Mammary epithelial cell (primary cell): ENCODE measurements at regions of chr7 and their contacts with region 1.

Region 1: GRCh38 chr7:48109848-48110663 is 21.0 kb downstream of the UPP1 start:
- DNase-seq: peak; percentile 71
- H3K4me3 ChIP-seq: no peak overlapping the region
- H3K27ac ChIP-seq: no peak overlapping the region
- H3K4me1 ChIP-seq: peaks cover 12% of the 10 kb centered on the region
- H3K27me3 ChIP-seq: no peaks in the 10 kb centered on the region
- CTCF ChIP-seq: peak; percentile 98 to 99

Region 2: DNA sequence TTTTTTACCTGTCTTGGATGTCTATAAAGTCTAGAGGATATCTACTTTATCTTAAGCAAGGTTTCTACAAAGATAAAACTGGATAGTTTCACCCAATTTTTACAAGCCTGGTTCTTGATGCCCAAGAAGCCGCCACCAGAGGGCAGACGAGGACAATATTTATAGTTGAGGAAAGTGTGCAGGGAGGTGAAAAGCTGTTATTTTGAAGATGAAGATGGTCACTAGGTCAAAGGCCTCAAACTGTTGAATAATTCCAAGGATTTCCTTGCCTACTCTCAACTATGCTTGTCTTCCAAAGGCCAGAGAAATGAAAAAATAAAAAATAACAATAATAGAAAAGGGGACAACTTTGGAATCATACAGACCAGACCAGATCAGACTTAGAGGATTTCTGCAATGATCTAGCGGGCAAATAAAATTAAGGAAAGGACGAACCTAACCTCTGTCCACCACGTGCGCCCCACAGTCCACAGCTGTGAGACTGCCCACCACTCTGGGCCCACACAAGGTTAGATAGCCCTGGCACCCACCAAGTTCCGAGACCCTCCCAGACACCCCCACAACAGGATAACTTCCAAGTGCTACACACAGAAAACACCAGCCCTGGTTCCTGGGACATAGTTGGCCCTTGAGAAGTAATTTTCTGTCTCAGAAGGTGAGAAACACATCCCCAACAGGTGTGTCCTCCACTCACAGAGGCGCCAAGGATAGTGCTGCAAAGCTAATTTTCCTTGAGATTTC is 164.6 kb before region 1 on chr7:
- CTCF ChIA-PET with region 1: interaction called, 10 read pairs
- dilution Hi-C with region 1: no loop called
- in situ Hi-C with region 1: no loop called
- intact Hi-C with region 1: loop called (anchors 1 kb)
- DNase-seq: peak; percentile 30
- H3K4me3 ChIP-seq: no peak overlapping the region
- H3K27ac ChIP-seq: no peak overlapping the region
- H3K4me1 ChIP-seq: peaks cover 16% of the 10 kb centered on the region
- H3K27me3 ChIP-seq: no peaks in the 10 kb centered on the region
- CTCF ChIP-seq: peak; percentile 66 to 74

Region 3: DNA sequence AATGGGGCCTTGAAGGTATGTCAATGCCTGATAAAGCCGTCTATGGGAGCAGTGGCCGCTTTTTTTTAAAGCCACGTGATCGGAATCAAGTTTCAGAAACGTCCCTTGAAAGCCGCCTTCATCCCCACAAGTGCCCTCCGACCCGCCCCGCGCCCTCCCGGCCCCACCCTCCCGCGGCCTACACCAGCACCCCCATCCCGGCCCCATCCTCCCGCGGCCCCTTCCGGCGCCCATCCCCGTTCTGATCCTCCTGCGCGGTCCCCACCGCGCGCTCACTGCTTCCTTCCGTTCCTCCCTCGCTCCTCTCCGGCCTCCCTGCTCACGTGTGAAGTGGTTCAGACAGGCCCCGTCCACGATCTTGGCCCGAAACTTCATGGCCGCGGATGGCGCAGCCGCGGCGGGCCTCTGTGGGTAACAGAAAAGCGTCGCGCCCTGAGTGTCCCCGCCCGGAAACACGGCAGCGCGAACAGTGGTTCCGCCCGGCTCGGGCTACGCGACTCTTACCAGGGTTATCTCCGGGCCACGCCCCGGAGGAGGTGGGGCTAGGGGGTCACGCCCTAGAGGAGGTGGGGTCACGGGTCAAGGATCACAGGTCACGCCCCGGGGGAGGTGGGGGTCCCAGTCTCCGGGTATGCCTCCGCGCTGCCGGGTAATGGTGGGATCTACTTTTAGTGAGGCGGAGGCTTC is 130.8 kb before region 1 on chr7 and contains the start of gene HUS1:
- CTCF ChIA-PET with region 1: interaction called, 3 read pairs
- dilution Hi-C with region 1: no loop called
- in situ Hi-C with region 1: loop called in 1 of 2 experiments (anchors 10 kb)
- intact Hi-C with region 1: no loop called
- DNase-seq: peak; percentile 85
- H3K4me3 ChIP-seq: peak within 1 kb of the TSS; percentile 73 to 90 (median 78)
- H3K27ac ChIP-seq: peak within 1 kb of the TSS; percentile 50
- H3K4me1 ChIP-seq: peaks cover 10% of the 10 kb centered on the region
- H3K27me3 ChIP-seq: no peaks in the 10 kb centered on the region
- CTCF ChIP-seq: no peak
- total RNA-seq, gene HUS1: 31.3 to 36.8 TPM

Region 4: DNA sequence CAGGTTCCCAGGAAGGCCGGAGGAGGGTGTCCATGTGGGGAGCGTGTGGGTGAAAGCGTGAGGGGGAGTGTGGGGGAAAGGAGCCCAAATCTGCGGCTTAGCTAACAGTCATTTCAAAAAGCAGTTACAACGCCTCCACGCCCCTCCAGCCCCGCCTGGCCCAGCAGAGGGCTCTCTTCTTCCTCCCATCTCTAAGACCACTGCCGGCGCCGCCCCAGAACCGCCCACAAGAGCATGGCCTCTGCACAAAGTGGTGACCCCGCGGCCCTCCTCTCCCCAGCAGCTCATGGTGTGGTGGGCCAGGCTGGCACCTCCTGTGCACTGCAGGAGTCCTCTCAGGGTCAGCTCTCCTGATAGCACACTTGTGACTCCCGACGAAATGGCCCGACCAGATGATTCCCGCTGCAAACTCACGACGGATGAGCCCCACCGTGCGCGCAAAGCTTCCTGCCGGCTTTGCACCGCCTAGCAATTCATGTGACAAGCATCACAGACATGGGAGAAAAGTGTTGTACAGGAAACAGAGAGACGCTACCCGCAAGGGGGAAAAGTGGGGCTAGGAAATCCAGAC is 118.2 kb before region 1 on chr7:
- CTCF ChIA-PET with region 1: interaction called, 5 read pairs
- dilution Hi-C with region 1: no loop called
- in situ Hi-C with region 1: no loop called
- intact Hi-C with region 1: loop called (anchors 1 kb)
- DNase-seq: peak; percentile 52
- H3K4me3 ChIP-seq: peak overlapping the region; percentile 34 to 52 (median 35)
- H3K27ac ChIP-seq: no peak overlapping the region
- H3K4me1 ChIP-seq: peaks cover 7% of the 10 kb centered on the region
- H3K27me3 ChIP-seq: no peaks in the 10 kb centered on the region
- CTCF ChIP-seq: peak; percentile 32 to 62

Region 5: DNA sequence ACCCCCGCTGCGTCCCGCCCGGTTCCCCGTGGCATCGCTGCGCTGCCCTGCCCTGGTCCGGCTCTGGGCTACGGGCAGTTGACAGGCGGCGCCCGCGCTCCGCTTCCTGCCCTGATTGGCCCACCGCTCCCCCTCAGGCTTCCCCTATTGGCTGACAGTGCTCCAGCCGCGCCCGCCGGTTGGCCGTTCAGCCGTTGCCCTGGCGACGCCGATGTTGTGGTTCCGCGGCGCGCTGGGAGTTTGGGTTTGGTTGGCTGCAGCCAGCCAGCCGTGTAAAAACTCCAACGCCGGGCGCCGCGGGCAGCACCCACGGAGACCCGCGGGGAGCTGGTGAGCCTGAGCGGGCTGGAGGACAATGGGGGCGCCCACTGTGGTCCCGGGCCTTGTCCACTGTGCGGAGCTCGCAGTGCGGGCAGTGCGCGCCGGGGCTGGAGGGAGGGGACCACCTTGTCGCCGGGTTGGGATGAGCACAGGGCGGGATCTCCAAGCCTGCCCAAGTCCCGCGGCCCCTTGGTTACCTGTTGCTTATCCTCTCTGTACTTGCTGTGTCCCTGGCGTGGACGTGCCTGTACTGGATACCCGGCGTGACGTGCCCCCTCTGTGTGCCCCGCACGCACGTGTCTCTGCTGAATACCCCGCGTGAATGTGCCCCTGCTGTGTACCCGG is 74.6 kb before region 1 on chr7 and contains the start of gene C7orf57:
- CTCF ChIA-PET with region 1: no interaction called
- dilution Hi-C with region 1: no loop called
- in situ Hi-C with region 1: no loop called
- intact Hi-C with region 1: no loop called
- DNase-seq: peak; percentile 87
- H3K4me3 ChIP-seq: peak within 1 kb of the TSS; percentile 53 to 74 (median 61)
- H3K27ac ChIP-seq: peak within 1 kb of the TSS; percentile 33
- H3K4me1 ChIP-seq: peaks cover 15% of the 10 kb centered on the region
- H3K27me3 ChIP-seq: no peaks in the 10 kb centered on the region
- CTCF ChIP-seq: peak in 1 of 2 donors; percentile 25
- total RNA-seq, gene C7orf57: 0.67 to 2.0 TPM

Region 6: DNA sequence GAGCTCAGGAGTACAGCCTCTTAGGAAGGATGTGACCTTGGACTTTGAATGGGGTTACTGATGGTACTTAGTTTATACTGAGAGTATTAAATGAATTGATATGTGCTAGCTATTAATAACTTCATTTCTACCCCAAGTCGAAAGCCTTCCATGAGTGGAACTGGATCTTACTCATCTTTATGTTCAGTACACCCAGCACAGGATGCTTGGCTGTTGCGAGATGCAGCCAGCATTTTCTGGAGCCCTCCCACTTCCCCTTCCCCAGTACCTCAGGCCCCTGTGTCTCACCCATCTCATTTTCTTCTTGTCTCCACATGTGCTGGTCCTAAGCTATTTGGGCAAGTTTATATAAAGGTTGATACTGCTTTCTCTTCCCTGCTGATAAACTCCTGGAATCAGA is 13.8 kb before region 1 on chr7:
- CTCF ChIA-PET with region 1: interaction called, 11 read pairs
- dilution Hi-C with region 1: no loop called
- in situ Hi-C with region 1: no loop called
- intact Hi-C with region 1: no loop called
- DNase-seq: no peak
- H3K4me3 ChIP-seq: no peak overlapping the region
- H3K27ac ChIP-seq: no peak overlapping the region
- H3K4me1 ChIP-seq: peaks cover 56% of the 10 kb centered on the region
- H3K27me3 ChIP-seq: no peaks in the 10 kb centered on the region
- CTCF ChIP-seq: no peak

Region 7: DNA sequence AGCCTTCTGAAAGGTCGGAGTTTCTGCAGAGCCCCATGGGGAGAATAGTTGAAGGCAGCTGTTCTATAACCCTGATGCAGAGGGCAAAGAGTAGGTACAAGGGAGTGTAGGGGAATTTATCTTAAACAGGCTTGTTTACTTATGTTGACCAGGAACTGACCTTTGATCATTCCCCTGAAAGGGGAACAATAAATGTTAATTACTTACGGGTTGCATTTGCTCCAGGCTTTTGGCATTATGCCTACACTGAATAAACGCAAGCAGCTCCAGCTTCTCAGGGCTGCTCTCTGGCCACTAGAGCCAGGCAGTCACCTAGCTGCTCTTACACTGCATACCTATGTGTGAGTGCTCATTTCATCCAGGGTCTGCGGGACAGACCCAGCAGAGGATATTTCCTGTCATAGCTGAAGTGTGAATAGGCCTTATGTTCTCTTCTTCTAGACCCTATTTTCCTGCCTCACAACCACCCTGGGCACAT is 34.3 kb after region 1 on chr7:
- CTCF ChIA-PET with region 1: no interaction called
- dilution Hi-C with region 1: no loop called
- in situ Hi-C with region 1: no loop called
- intact Hi-C with region 1: no loop called
- DNase-seq: no peak
- H3K4me3 ChIP-seq: no peak overlapping the region
- H3K27ac ChIP-seq: no peak overlapping the region
- H3K4me1 ChIP-seq: no peaks in the 10 kb centered on the region
- H3K27me3 ChIP-seq: no peaks in the 10 kb centered on the region
- CTCF ChIP-seq: no peak